Naive thymus-derived CD4-positive, alpha-beta T cell (primary cell): ENCODE measurements at regions of chr16 and their contacts with region 1.

Region 1: GRCh38 chr16:81730090-81731051 is 48.7 kb upstream of the PLCG2 start:
- DNase-seq: peak; percentile 31 to 65 (median 57)
- ATAC-seq: peak; percentile 89
- H3K4me3 ChIP-seq: peak overlapping the region; percentile 56
- H3K4me3 Mint-ChIP-seq: peak overlapping the region; percentile 80 to 91 (median 85)
- H3K27ac ChIP-seq: peak overlapping the region; percentile 76
- H3K27ac Mint-ChIP-seq: peak overlapping the region; percentile 82 to 93 (median 88)
- H3K4me1 ChIP-seq: peaks cover 3 to 8% of the 10 kb centered on the region in 2 donors
- H3K4me1 Mint-ChIP-seq: peaks cover 12 to 18% (median 17%) of the 10 kb centered on the region in 7 donors
- H3K27me3 ChIP-seq: no peaks in the 10 kb centered on the region
- H3K27me3 Mint-ChIP-seq: peaks cover 0 to 8% (median 0%) of the 10 kb centered on the region in 5 donors

Region 2: DNA sequence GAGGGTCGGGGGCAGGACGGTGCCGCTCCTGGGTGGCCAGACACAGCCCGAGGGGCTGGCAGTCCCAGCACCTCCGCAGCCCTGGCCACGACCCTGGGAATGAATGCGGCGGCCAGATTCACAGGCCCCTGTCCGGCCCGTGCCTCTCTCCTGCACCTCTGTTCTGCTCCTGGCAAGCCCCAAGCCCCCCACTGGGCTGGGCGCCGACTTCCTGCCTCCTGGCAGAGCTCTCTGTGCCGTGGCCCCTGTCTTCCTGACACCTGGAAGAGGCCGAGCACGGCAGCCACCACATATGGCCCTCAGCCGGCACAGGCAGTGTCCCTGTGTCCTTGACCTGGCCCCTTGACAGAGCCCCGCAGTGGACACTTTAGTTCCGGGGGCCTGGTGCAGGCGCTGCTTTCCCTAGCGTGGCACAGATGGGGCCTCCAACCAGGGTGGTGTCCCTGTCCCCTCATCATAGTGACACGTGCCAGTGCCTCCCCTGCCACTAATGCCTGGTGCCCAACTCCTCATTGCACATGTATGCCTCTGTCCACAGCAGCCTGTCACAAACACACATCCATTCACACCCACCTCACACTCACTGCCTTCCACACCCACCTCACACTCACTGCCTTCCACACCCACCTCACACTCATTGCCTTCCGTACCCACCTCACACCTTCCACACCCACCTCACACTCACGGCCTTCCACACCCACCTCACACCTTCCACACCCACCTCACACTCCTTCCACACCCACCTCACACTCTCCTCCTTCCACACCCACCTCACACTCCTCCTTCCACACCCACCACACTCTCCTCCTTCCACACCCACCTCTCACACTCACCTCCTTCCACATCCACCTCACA is 61.9 kb before region 1 on chr16:
- CTCF ChIA-PET with region 1: no interaction called
- POLR2A ChIA-PET with region 1: no interaction called
- intact Hi-C with region 1: no loop called
- DNase-seq: no peak
- ATAC-seq: no peak
- H3K4me3 ChIP-seq: no peak overlapping the region
- H3K4me3 Mint-ChIP-seq: no peak overlapping the region
- H3K27ac ChIP-seq: no peak overlapping the region
- H3K27ac Mint-ChIP-seq: peak overlapping the region in 4 of 9 donors; percentile 7 to 56 (median 22)
- H3K4me1 ChIP-seq: no peaks in the 10 kb centered on the region
- H3K4me1 Mint-ChIP-seq: peaks cover 0 to 3% (median 0%) of the 10 kb centered on the region in 7 donors
- H3K27me3 ChIP-seq: no peaks in the 10 kb centered on the region
- H3K27me3 Mint-ChIP-seq: no peaks in the 10 kb centered on the region

Region 3: GRCh38 chr16:81703177-81704155 is 26.9 kb before region 1 on chr16:
- CTCF ChIA-PET with region 1: no interaction called
- POLR2A ChIA-PET with region 1: no interaction called
- intact Hi-C with region 1: no loop called
- DNase-seq: no peak
- ATAC-seq: peak; percentile 18
- H3K4me3 ChIP-seq: no peak overlapping the region
- H3K4me3 Mint-ChIP-seq: no peak overlapping the region
- H3K27ac ChIP-seq: no peak overlapping the region
- H3K27ac Mint-ChIP-seq: peak overlapping the region in 3 of 9 donors; percentile 57 to 81 (median 79)
- H3K4me1 ChIP-seq: no peaks in the 10 kb centered on the region
- H3K4me1 Mint-ChIP-seq: peaks cover 0 to 8% (median 0%) of the 10 kb centered on the region in 7 donors
- H3K27me3 ChIP-seq: no peaks in the 10 kb centered on the region
- H3K27me3 Mint-ChIP-seq: no peaks in the 10 kb centered on the region

Region 4: DNA sequence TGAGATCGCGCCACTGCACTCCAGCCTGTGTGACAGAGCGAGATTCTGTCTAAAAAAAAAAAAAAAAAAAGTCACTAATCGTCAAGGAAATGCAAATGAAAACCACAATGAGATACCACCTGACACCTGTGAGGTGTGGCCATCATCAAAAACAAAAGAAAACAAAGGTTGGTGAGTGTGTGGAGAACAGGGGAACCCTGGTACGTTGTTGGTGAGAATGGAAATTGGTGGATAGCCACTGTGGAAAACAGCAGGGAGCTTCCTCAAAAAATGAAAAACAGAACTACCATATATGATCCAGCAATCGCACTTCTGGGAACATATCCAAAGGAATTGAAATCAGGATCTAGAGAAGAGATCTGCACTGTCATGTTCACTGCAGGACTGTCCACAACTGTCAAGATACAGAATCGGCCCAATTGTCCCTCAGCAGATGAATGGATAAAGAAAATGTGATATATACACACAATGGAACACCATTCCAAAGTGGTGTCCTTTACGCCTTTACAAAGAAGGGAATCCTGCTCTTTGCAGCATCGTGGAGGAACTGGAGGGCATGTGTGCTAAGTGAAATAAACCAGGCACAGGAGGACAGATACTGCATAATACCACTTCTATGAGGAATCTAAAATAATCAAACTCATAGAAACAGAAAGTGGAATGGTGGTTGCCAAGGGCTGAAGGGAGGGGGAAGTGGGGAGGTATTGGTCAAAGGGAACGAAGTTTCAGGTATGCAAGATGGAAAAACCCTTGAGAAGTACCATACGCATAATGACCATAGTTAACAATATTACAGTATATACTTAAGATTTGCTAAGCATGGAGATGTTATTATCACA is 14.8 kb before region 1 on chr16:
- CTCF ChIA-PET with region 1: interaction called, 9 read pairs
- POLR2A ChIA-PET with region 1: interaction called, 4 read pairs
- intact Hi-C with region 1: loop called in 1 of 2 experiments (anchors 2 kb)
- DNase-seq: peak in 7 of 9 donors; percentile 47 to 70 (median 68)
- ATAC-seq: peak; percentile 73
- H3K4me3 ChIP-seq: peak overlapping the region; percentile 7
- H3K4me3 Mint-ChIP-seq: peak overlapping the region; percentile 53 to 83 (median 75)
- H3K27ac ChIP-seq: no peak overlapping the region
- H3K27ac Mint-ChIP-seq: peak overlapping the region; percentile 66 to 96 (median 88)
- H3K4me1 ChIP-seq: peaks cover 25 to 35% of the 10 kb centered on the region in 2 donors
- H3K4me1 Mint-ChIP-seq: peaks cover 35 to 54% (median 43%) of the 10 kb centered on the region in 7 donors
- H3K27me3 ChIP-seq: no peaks in the 10 kb centered on the region
- H3K27me3 Mint-ChIP-seq: no peaks in the 10 kb centered on the region

Region 5: DNA sequence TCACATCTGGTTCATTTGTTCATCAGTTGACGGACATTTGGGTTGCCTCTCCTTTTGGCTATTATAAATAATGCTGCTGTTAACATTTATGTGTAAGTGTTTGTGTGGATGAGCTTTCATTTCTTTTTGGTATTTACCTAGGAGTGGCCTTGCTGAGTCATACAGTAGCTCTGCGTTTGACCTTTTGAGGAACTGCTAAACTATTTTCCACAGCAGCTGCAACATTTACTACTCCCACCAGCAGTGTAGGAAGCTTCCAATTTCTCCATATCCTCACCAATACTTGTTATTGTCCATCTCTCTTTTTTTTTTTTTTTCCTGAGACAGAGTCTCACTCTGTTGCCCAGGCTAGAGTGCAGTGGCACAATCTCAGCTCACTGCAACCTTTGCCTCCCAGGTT is 28.0 kb after region 1 on chr16:
- CTCF ChIA-PET with region 1: no interaction called
- POLR2A ChIA-PET with region 1: no interaction called
- intact Hi-C with region 1: no loop called
- DNase-seq: no peak
- ATAC-seq: no peak
- H3K4me3 ChIP-seq: no peak overlapping the region
- H3K4me3 Mint-ChIP-seq: no peak overlapping the region
- H3K27ac ChIP-seq: no peak overlapping the region
- H3K27ac Mint-ChIP-seq: no peak overlapping the region
- H3K4me1 ChIP-seq: no peaks in the 10 kb centered on the region
- H3K4me1 Mint-ChIP-seq: peaks cover 0 to 16% (median 0%) of the 10 kb centered on the region in 7 donors
- H3K27me3 ChIP-seq: no peaks in the 10 kb centered on the region
- H3K27me3 Mint-ChIP-seq: peaks cover 0 to 7% (median 4%) of the 10 kb centered on the region in 5 donors